H1 (cell line): ENCODE measurements at regions of chr10 and their contacts with region 1.

Region 1: GRCh38 chr10:84214612-84215235 is 10.6 kb downstream of the LRIT2 start:
- DNase-seq: peak; percentile 57 to 84
- H3K4me3 ChIP-seq: no peak overlapping the region
- H3K27ac ChIP-seq: no peak overlapping the region
- H3K4me1 ChIP-seq: peaks cover 0 to 4% (median 0%) of the 10 kb centered on the region in 4 experiments; a peak in 1 of 7 replicates
- H3K27me3 ChIP-seq: no peaks in the 10 kb centered on the region
- CTCF ChIP-seq: peak; percentile 79 to 91 (median 90)
- EP300 ChIP-seq: peak in 1 of 2 experiments; percentile 86; a peak in 2 of 3 replicates
- POLR2A ChIP-seq: no peak
- RAD21 ChIP-seq: peak; percentile 55 to 70

Region 2: DNA sequence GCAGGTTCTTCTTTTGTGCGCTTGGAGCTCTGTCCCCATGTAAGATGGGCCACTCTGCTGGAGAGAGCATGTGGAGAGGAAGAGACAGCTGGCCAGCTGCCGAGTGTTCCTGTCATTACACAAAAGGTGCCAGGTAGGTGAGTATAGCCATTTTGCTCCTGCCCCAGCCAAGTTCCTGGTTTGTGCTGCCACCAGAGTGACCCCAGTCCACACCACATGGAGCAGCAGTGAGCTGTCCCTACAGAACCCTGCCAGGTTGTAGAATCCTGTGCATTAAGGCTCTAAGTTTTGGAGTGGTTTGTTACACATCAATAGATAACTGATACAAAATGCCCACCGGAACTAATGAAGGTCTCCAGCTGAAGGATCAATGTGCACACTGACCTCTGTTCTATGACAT is 160.0 kb before region 1 on chr10:
- CTCF ChIA-PET with region 1: no interaction called
- POLR2A ChIA-PET with region 1: no interaction called
- DNase-seq: no peak
- H3K4me3 ChIP-seq: no peak overlapping the region
- H3K27ac ChIP-seq: no peak overlapping the region
- H3K4me1 ChIP-seq: peaks cover 0 to 4% (median 1%) of the 10 kb centered on the region in 4 experiments; a peak in 1 of 7 replicates
- H3K27me3 ChIP-seq: no peaks in the 10 kb centered on the region
- CTCF ChIP-seq: peak; percentile 41 to 53 (median 50)
- EP300 ChIP-seq: no peak
- POLR2A ChIP-seq: no peak
- RAD21 ChIP-seq: peak; percentile 31 to 35; a peak in 2 of 4 replicates

Region 3: GRCh38 chr10:84139126-84140035 is 75.3 kb before region 1 on chr10 and contains the start of gene GHITM:
- CTCF ChIA-PET with region 1: interaction called, 10 read pairs
- POLR2A ChIA-PET with region 1: interaction called, 3 read pairs
- DNase-seq: peak; percentile 97 to 100
- H3K4me3 ChIP-seq: peak within 1 kb of the TSS; percentile 88 to 97 (median 96)
- H3K27ac ChIP-seq: peak within 1 kb of the TSS; percentile 83
- H3K4me1 ChIP-seq: peaks cover 3 to 9% (median 4%) of the 10 kb centered on the region in 4 experiments; a peak in 6 of 7 replicates
- H3K27me3 ChIP-seq: no peaks in the 10 kb centered on the region
- CTCF ChIP-seq: peak; percentile 9 to 38 (median 37); a peak in 2 of 4 replicates
- EP300 ChIP-seq: no peak
- POLR2A ChIP-seq: peak; percentile 77 to 80
- RAD21 ChIP-seq: no peak
- total RNA-seq, gene GHITM: 87.8 and 97.0 TPM in 2 replicates

Region 4: GRCh38 chr10:84194424-84195040 is 20.2 kb before region 1 on chr10 and contains the start of gene CDHR1:
- CTCF ChIA-PET with region 1: interaction called, 21 read pairs
- POLR2A ChIA-PET with region 1: no interaction called
- DNase-seq: peak in 1 of 2 experiments; percentile 77
- H3K4me3 ChIP-seq: peak within 1 kb of the TSS; percentile 55 to 66 (median 63)
- H3K27ac ChIP-seq: no peak within 1 kb of the TSS
- H3K4me1 ChIP-seq: peaks cover 0 to 5% (median 2%) of the 10 kb centered on the region in 4 experiments; a peak in 4 of 7 replicates
- H3K27me3 ChIP-seq: peaks cover 2 to 36% (median 31%) of the 10 kb centered on the region in 4 experiments
- CTCF ChIP-seq: no peak
- EP300 ChIP-seq: no peak
- POLR2A ChIP-seq: no peak
- RAD21 ChIP-seq: no peak
- total RNA-seq, gene CDHR1: 8.7 and 10.5 TPM in 2 replicates

Region 5: GRCh38 chr10:84237199-84238051 is 22.7 kb after region 1 on chr10:
- CTCF ChIA-PET with region 1: interaction called, 29 read pairs
- POLR2A ChIA-PET with region 1: no interaction called
- DNase-seq: peak; percentile 38 to 94
- H3K4me3 ChIP-seq: no peak overlapping the region; a peak in 1 of 8 replicates
- H3K27ac ChIP-seq: no peak overlapping the region
- H3K4me1 ChIP-seq: peaks cover 0 to 2% (median 0%) of the 10 kb centered on the region in 4 experiments; a peak in 3 of 7 replicates
- H3K27me3 ChIP-seq: peaks cover 0 to 10% (median 7%) of the 10 kb centered on the region in 4 experiments; a peak in 5 of 7 replicates
- CTCF ChIP-seq: peak; percentile 79 to 90 (median 83)
- EP300 ChIP-seq: no peak
- POLR2A ChIP-seq: no peak
- RAD21 ChIP-seq: peak; percentile 37 to 56; a peak in 3 of 4 replicates

Region 6: GRCh38 chr10:84256510-84257342 is 42.0 kb after region 1 on chr10:
- CTCF ChIA-PET with region 1: interaction called, 14 read pairs
- POLR2A ChIA-PET with region 1: no interaction called
- DNase-seq: peak; percentile 49 to 91
- H3K4me3 ChIP-seq: no peak overlapping the region
- H3K27ac ChIP-seq: no peak overlapping the region
- H3K4me1 ChIP-seq: no peaks in the 10 kb centered on the region
- H3K27me3 ChIP-seq: peaks cover 0 to 8% (median 8%) of the 10 kb centered on the region in 4 experiments; a peak in 6 of 7 replicates
- CTCF ChIP-seq: peak; percentile 80 to 94 (median 88)
- EP300 ChIP-seq: no peak
- POLR2A ChIP-seq: no peak
- RAD21 ChIP-seq: peak; percentile 55 to 66

Region 7: GRCh38 chr10:84375011-84375410 is 160.3 kb after region 1 on chr10:
- CTCF ChIA-PET with region 1: no interaction called
- POLR2A ChIA-PET with region 1: no interaction called
- DNase-seq: no peak
- H3K4me3 ChIP-seq: no peak overlapping the region
- H3K27ac ChIP-seq: no peak overlapping the region
- H3K4me1 ChIP-seq: no peaks in the 10 kb centered on the region
- H3K27me3 ChIP-seq: no peaks in the 10 kb centered on the region
- CTCF ChIP-seq: peak in 2 of 3 experiments; percentile 56 to 68; a peak in 3 of 4 replicates
- EP300 ChIP-seq: no peak
- POLR2A ChIP-seq: no peak
- RAD21 ChIP-seq: peak; percentile 83 to 84